Common myeloid progenitor, CD34-positive (primary cell): ENCODE measurements at regions of chr10 and their contacts with region 1.

Region 1: DNA sequence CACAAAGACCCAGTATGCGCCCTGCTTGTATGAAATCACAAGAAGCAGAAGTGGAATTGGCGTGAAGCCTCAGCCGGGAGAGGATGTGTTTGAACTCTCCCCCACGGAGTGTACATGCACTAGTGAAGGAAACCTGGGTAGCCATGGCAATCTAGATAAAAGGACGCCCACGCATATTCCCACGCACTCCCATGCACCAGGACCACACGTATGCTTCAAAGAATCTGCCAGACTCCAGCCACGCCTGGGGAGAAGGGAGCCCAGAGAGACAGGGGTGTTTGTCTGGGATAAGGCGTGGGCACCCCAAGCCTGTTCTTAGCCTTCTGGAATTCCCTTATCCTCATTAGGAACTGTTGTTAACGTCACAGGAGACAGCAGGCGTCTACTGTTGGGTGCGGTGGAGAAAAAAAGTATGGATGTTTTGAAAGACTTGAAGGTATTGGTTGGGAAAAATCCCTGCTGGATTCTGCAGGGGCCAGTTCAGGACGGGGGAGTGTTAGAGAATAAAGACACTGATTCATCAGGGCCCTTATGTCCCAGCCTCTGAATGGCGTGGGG is 28.9 kb upstream of the ECHDC3 start:
- DNase-seq: peak; percentile 55 to 86 (median 83)
- H3K4me3 ChIP-seq: no peak overlapping the region
- H3K27ac ChIP-seq: no peak overlapping the region
- H3K4me1 ChIP-seq: peaks cover 3 to 66% (median 31%) of the 10 kb centered on the region in 4 experiments
- H3K27me3 ChIP-seq: no peaks in the 10 kb centered on the region

Region 2: DNA sequence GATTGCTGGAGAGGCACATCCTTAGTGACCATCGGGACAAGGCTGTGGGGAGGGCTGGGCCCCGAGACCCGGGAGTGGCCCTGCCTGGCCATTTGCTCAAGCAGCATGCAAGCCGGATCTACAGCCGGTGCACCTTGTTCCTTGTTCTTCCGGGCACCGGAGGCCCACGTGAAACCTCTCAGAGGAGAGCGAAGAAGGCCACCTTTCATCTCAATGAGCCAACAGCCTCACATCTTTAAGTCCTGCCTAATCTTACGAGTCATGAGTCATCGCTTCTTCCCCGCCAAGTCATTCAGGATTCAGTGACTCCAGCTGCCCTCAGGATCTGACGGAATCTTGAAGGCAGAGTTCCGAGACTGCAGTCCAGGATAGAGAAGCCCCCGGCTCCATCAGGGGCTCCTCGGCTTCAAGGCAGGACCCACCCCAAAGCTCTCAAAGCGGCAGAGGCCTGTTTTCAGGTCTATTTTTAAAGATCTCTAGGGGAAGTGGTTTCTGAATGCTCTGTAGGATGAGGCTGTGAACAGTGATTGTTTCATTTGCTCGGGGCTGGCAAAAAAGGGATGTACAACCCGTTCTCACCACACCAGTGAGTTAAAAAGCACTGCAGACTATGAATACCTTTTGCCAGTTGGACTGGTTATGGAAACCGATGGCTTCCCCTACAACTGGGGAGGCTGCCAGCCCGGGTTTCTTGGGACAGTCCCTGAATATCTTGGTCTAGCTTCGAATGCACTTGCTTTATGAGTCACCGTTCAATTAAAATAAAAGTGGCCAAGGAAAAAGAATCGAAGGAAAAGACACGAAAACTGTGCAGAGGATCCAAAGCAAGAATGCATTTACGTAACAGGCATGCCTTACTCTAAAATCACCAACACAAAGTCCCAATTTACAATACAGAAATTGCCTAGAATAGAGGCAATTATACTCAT is 28.3 kb before region 1 on chr10:
- CTCF ChIA-PET with region 1: interaction called, 19 read pairs
- POLR2A ChIA-PET with region 1: interaction called, 4 read pairs
- DNase-seq: peak; percentile 88 to 98 (median 96)
- H3K4me3 ChIP-seq: peak overlapping the region in 6 of 7 experiments; percentile 11 to 72 (median 56)
- H3K27ac ChIP-seq: peak overlapping the region; percentile 58 to 78
- H3K4me1 ChIP-seq: peaks cover 25 to 75% (median 53%) of the 10 kb centered on the region in 4 experiments
- H3K27me3 ChIP-seq: peaks cover 0 to 3% (median 0%) of the 10 kb centered on the region in 5 experiments

Region 3: GRCh38 chr10:11724938-11725776 is 11.9 kb after region 1 on chr10:
- CTCF ChIA-PET with region 1: interaction called, 13 read pairs
- POLR2A ChIA-PET with region 1: no interaction called
- DNase-seq: peak; percentile 72 to 87 (median 83)
- H3K4me3 ChIP-seq: no peak overlapping the region
- H3K27ac ChIP-seq: no peak overlapping the region
- H3K4me1 ChIP-seq: peaks cover 0 to 20% (median 3%) of the 10 kb centered on the region in 4 experiments
- H3K27me3 ChIP-seq: no peaks in the 10 kb centered on the region